ENCODE measurements at regions of chr17 and their contacts with region 1.

Region 1: GRCh38 chr17:74212913-74213791 is at the start of gene TTYH2:
- DNase-seq: peak; percentile 95
- H3K4me3 ChIP-seq: peak within 1 kb of the TSS; percentile 66
- H3K27ac ChIP-seq: peak within 1 kb of the TSS; percentile 67
- H3K4me1 ChIP-seq: peaks cover 21% of the 10 kb centered on the region
- H3K27me3 ChIP-seq: no peaks in the 10 kb centered on the region
- CTCF ChIP-seq: peak; percentile 31; the same call in 1 of the 2 replicates
- total RNA-seq, gene TTYH2: 13.7 and 15.4 TPM in 2 replicates

Region 2: GRCh38 chr17:73690676-73691075 is 522.5 kb before region 1 on chr17:
- CTCF ChIA-PET with region 1: no interaction called
- POLR2A ChIA-PET with region 1: no interaction called
- intact Hi-C with region 1: no loop called
- DNase-seq: peak; percentile 11
- H3K4me3 ChIP-seq: no peak overlapping the region
- H3K27ac ChIP-seq: no peak overlapping the region
- H3K4me1 ChIP-seq: no peaks in the 10 kb centered on the region
- H3K27me3 ChIP-seq: no peaks in the 10 kb centered on the region
- CTCF ChIP-seq: no peak

Region 3: GRCh38 chr17:74123350-74123749 is 89.8 kb before region 1 on chr17:
- CTCF ChIA-PET with region 1: no interaction called
- POLR2A ChIA-PET with region 1: no interaction called
- intact Hi-C with region 1: no loop called
- DNase-seq: no peak
- H3K4me3 ChIP-seq: no peak overlapping the region
- H3K27ac ChIP-seq: no peak overlapping the region
- H3K4me1 ChIP-seq: no peaks in the 10 kb centered on the region
- H3K27me3 ChIP-seq: no peaks in the 10 kb centered on the region
- CTCF ChIP-seq: no peak

Region 4: GRCh38 chr17:74354123-74354522 is 141.0 kb after region 1 on chr17:
- CTCF ChIA-PET with region 1: interaction called, 5 read pairs
- POLR2A ChIA-PET with region 1: no interaction called
- intact Hi-C with region 1: loop called (anchors 5 kb)
- DNase-seq: peak; percentile 73
- H3K4me3 ChIP-seq: no peak overlapping the region
- H3K27ac ChIP-seq: no peak overlapping the region
- H3K4me1 ChIP-seq: no peaks in the 10 kb centered on the region
- H3K27me3 ChIP-seq: peaks cover 70% of the 10 kb centered on the region
- CTCF ChIP-seq: peak; percentile 98

Region 5: DNA sequence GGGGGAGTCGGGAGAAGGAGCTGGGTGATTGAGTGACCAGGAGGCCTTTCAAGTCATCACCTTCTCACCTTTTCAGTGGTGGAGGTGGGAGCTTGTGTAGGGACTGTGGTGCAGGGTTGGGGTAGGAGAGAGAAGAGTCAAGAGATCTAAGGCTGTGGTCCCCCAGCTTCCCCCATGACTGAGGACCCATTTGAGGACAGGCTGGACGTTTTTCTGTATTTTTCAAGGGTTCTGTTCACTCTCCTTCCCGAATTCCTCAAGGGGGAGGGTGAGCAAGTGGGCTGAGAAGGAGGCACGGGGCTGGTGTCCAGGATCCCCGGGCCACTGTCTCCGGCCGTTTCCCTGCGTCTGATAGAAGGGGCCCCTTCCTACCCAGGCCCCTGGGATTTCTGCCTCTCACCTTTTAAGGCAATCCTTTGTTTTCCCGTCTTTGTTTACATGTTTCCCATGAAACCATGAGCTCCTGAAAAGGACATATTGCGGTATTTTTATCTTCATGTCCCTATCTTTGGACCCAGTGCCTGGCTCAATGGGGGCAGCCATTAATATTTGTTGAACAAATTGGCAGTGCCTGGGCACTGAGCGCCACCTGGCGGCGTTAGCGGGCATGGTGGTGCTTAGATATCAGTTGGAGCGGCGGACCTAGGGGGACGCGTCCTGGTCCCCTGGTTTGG is 244.1 kb after region 1 on chr17:
- CTCF ChIA-PET with region 1: no interaction called
- POLR2A ChIA-PET with region 1: no interaction called
- intact Hi-C with region 1: loop called (anchors 10 kb)
- DNase-seq: peak; percentile 81
- H3K4me3 ChIP-seq: no peak overlapping the region
- H3K27ac ChIP-seq: no peak overlapping the region
- H3K4me1 ChIP-seq: peaks cover 37% of the 10 kb centered on the region
- H3K27me3 ChIP-seq: no peaks in the 10 kb centered on the region
- CTCF ChIP-seq: peak; percentile 97